ENCODE measurements at regions of chr10 and their contacts with region 1.

Region 1: GRCh38 chr10:74826142-74827044 is at the start of gene KAT6B:
- DNase-seq: peak; percentile 100
- H3K4me3 Mint-ChIP-seq: peak within 1 kb of the TSS; percentile 78
- H3K27ac Mint-ChIP-seq: peak within 1 kb of the TSS; percentile 95
- H3K4me1 Mint-ChIP-seq: peaks cover 35% of the 10 kb centered on the region
- H3K27me3 Mint-ChIP-seq: no peaks in the 10 kb centered on the region
- CTCF ChIP-seq: peak; percentile 21
- total RNA-seq, gene KAT6B: 16.4 and 18.3 TPM in 2 replicates

Region 2: GRCh38 chr10:74282151-74282850 is 544.1 kb before region 1 on chr10:
- CTCF ChIA-PET with region 1: no interaction called
- POLR2A ChIA-PET with region 1: no interaction called
- intact Hi-C with region 1: loop called (anchors 5 kb)
- DNase-seq: peak; percentile 77
- H3K4me3 Mint-ChIP-seq: peak overlapping the region; percentile 28
- H3K27ac Mint-ChIP-seq: peak overlapping the region; percentile 97
- H3K4me1 Mint-ChIP-seq: peaks cover 28% of the 10 kb centered on the region
- H3K27me3 Mint-ChIP-seq: no peaks in the 10 kb centered on the region
- CTCF ChIP-seq: no peak

Region 3: DNA sequence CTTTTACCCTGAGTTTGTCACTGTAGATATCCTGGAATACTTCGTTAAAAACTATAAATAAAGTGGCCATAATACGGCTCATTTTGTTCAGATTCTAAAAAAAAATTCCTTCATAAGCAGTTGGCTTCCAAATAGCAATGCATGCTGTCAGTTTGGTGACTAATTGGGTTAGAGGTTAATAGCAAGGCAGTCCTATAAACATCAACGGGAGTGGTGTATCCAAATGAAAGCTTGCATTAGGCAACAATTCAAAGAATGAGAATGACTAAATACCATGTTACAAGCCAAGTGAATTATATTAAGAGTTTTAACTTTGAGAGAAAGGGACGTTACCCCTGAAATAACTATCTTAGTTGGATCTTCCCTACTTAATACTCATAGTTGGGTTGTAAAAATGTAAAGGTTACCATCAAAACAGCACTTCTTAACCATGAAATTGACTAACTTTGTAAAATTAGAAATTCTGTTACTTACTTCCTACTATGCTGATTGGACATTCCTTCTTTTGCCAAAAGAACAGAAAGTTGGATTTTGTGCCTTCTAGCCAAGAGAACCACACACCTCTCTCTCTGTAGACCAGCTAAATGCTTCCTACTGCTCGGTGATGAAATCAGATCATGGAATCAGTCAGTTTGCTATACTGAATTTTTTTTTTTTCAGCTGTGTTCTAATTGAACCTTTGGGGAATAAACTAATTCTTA is 98.0 kb after region 1 on chr10:
- CTCF ChIA-PET with region 1: interaction called, 4 read pairs
- POLR2A ChIA-PET with region 1: interaction called, 3 read pairs
- intact Hi-C with region 1: loop called (anchors 10 kb)
- DNase-seq: peak; percentile 91
- H3K4me3 Mint-ChIP-seq: peak overlapping the region; percentile 58
- H3K27ac Mint-ChIP-seq: peak overlapping the region; percentile 28
- H3K4me1 Mint-ChIP-seq: peaks cover 35% of the 10 kb centered on the region
- H3K27me3 Mint-ChIP-seq: no peaks in the 10 kb centered on the region
- CTCF ChIP-seq: no peak

Measured in MCF 10A (cell line).